Activated naive CD4-positive, alpha-beta T cell treated with anti-CD3 and anti-CD28 coated beads for 36 hours (primary cell): ENCODE measurements at regions of chr2 and their contacts with region 1.

Region 1: GRCh38 chr2:160353166-160353565 is 140.4 kb downstream of the RBMS1 start:
- DNase-seq: peak; percentile 59
- H3K4me3 Mint-ChIP-seq: no peak overlapping the region
- H3K27ac Mint-ChIP-seq: no peak overlapping the region
- H3K4me1 Mint-ChIP-seq: peaks cover 66% of the 10 kb centered on the region
- H3K27me3 Mint-ChIP-seq: no peaks in the 10 kb centered on the region

Region 2: GRCh38 chr2:160561551-160562295 is 208.6 kb after region 1 on chr2:
- CTCF ChIA-PET with region 1: no interaction called
- intact Hi-C with region 1: no loop called
- DNase-seq: no peak
- H3K4me3 Mint-ChIP-seq: no peak overlapping the region
- H3K27ac Mint-ChIP-seq: no peak overlapping the region
- H3K4me1 Mint-ChIP-seq: peaks cover 14% of the 10 kb centered on the region
- H3K27me3 Mint-ChIP-seq: no peaks in the 10 kb centered on the region

Region 3: DNA sequence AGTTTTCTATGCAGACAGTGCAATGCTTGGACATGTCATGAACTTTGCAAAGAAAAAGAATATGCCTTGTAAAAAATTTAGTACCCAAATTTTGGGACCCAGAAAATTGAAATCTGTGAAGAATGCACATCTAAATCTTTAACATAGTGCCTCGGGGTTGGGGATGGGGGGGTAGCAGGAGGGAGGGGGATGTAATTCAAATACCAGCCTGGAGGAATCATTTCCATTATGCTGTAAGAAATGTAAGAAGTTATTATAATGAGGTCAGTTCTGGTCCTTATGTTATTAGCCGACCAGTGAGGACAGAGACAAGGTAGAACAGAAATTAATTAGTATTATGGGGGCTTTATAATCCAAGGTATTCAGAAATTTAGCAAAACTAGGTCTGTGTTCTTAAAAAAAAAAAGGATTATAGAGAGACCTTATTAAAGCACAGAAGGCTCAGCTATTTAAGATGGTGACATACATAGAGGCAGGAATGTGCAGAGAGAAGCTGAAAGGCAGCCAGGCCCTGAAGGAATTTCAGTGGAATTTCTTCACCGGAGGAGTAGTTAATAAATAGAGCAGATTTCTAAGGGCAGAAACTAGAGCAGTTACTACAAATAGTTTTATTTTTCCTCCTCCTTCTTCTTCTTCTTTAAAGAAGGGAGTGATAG is 229.5 kb after region 1 on chr2:
- CTCF ChIA-PET with region 1: no interaction called
- intact Hi-C with region 1: loop called (anchors 5 kb)
- DNase-seq: no peak
- H3K4me3 Mint-ChIP-seq: no peak overlapping the region
- H3K27ac Mint-ChIP-seq: no peak overlapping the region
- H3K4me1 Mint-ChIP-seq: peaks cover 11% of the 10 kb centered on the region
- H3K27me3 Mint-ChIP-seq: no peaks in the 10 kb centered on the region

Region 4: DNA sequence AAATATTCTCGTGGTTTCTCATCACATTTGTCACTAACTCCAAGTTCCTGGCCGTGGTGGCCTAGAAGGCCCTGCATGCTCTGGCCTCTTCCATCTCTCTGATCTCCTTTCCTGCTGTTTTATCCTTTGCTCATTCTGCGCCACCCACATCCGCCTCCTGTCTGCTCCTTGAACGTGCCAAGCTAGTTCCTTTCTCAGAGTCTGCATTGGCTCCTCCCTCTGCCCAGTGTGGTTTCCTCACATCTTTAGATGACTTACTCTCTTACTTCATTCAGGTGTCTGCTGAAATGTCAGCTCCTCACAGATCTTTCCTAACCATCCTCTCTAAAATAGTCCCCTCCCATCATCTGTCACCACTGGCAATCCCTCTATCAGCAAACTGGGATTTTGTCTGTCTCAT is 299.1 kb after region 1 on chr2:
- CTCF ChIA-PET with region 1: no interaction called
- intact Hi-C with region 1: loop called (anchors 5 kb)
- DNase-seq: peak; percentile 87
- H3K4me3 Mint-ChIP-seq: no peak overlapping the region
- H3K27ac Mint-ChIP-seq: peak overlapping the region; percentile 17
- H3K4me1 Mint-ChIP-seq: peaks cover 30% of the 10 kb centered on the region
- H3K27me3 Mint-ChIP-seq: no peaks in the 10 kb centered on the region

Region 5: GRCh38 chr2:160666154-160667060 is 313.2 kb after region 1 on chr2:
- CTCF ChIA-PET with region 1: no interaction called
- intact Hi-C with region 1: loop called (anchors 5 kb)
- DNase-seq: no peak
- H3K4me3 Mint-ChIP-seq: no peak overlapping the region
- H3K27ac Mint-ChIP-seq: no peak overlapping the region
- H3K4me1 Mint-ChIP-seq: peaks cover 19% of the 10 kb centered on the region
- H3K27me3 Mint-ChIP-seq: no peaks in the 10 kb centered on the region

Region 6: GRCh38 chr2:160918906-160919503 is 565.8 kb after region 1 on chr2:
- CTCF ChIA-PET with region 1: interaction called, 3 read pairs
- intact Hi-C with region 1: loop called (anchors 1 kb)
- DNase-seq: peak; percentile 58
- H3K4me3 Mint-ChIP-seq: no peak overlapping the region
- H3K27ac Mint-ChIP-seq: no peak overlapping the region
- H3K4me1 Mint-ChIP-seq: no peaks in the 10 kb centered on the region
- H3K27me3 Mint-ChIP-seq: no peaks in the 10 kb centered on the region

Region 7: GRCh38 chr2:160970052-160970965 is 617.1 kb after region 1 on chr2:
- CTCF ChIA-PET with region 1: interaction called, 3 read pairs
- intact Hi-C with region 1: loop called (anchors 1 kb)
- DNase-seq: peak; percentile 29
- H3K4me3 Mint-ChIP-seq: no peak overlapping the region
- H3K27ac Mint-ChIP-seq: no peak overlapping the region
- H3K4me1 Mint-ChIP-seq: peaks cover 8% of the 10 kb centered on the region
- H3K27me3 Mint-ChIP-seq: no peaks in the 10 kb centered on the region

Region 8: GRCh38 chr2:161273038-161273760 is 920.0 kb after region 1 on chr2:
- CTCF ChIA-PET with region 1: no interaction called
- intact Hi-C with region 1: loop called (anchors 5 kb)
- DNase-seq: peak; percentile 37
- H3K4me3 Mint-ChIP-seq: no peak overlapping the region
- H3K27ac Mint-ChIP-seq: no peak overlapping the region
- H3K4me1 Mint-ChIP-seq: peaks cover 3% of the 10 kb centered on the region
- H3K27me3 Mint-ChIP-seq: peaks cover 2% of the 10 kb centered on the region